PC-9 (cell line): ENCODE measurements at regions of chrX and their contacts with region 1.

Region 1: DNA sequence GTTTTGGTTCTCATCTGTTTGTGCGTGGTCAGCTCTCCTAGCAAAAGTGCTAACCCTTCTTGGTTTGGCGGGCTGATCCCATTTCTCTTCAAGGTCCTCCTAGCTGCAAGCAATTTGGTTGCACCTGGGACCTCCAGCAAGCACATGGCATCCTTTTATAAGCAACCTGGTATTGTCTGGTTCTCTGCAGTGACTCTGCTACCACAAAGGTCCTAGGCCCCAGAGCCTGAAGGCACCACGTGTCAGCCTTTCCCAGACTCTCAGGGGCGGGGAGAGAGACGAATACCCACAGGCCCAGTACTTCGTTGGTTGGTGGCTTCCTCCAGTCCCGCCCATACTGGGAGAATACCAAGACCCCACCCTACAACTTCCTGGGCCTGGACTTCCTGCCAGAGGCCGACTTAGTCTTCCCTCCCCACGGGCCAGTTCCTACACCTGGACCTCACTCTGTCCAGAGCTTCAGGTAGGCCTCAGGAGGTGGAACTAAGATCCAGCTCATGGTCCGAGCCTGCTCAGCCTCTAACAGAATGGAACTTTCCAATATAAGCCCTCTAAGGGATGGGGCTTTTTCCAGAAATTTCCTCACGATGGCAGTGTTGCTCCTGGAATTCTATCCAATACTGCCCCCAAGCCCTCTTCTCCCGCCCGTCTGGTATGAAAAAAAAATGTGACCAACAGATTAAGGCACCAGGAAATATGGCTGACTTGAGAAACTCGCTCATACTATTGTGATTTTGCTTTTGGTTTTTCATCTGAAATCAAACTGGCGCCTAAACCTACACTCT is 192.5 kb upstream of the STK26 start:
- DNase-seq: peak; percentile 91 to 97
- H3K4me3 ChIP-seq: peak overlapping the region; percentile 70
- H3K27ac ChIP-seq: peak overlapping the region; percentile 91
- H3K4me1 ChIP-seq: peaks cover 29% of the 10 kb centered on the region
- H3K27me3 ChIP-seq: no peaks in the 10 kb centered on the region
- CTCF ChIP-seq: peak; percentile 79

Region 2: DNA sequence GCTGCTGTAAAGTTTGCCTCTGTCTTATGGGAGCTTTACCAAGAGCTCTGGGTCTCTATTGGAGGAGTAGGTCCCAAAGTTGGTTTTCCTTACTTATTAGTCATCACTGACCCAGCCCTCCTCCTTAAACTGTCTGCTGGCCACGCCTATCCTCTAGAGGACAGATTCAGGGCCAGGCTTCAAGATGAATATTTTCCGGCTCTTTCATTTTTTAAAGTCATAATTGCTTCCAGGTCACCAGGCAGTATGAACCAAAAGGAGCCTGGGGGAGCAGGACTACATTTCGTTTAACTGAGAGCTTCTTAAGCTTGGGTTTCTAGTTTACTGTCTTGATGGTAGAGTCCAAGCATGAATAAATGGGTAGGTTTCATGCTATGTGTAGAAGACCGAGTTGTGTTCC is 1834.5 kb before region 1 on chrX:
- CTCF ChIA-PET with region 1: no interaction called
- POLR2A ChIA-PET with region 1: no interaction called
- intact Hi-C with region 1: no loop called
- DNase-seq: no peak
- H3K4me3 ChIP-seq: no peak overlapping the region
- H3K27ac ChIP-seq: no peak overlapping the region
- H3K4me1 ChIP-seq: peaks cover 5% of the 10 kb centered on the region; the same call in 1 of the 2 replicates
- H3K27me3 ChIP-seq: no peaks in the 10 kb centered on the region
- CTCF ChIP-seq: no peak

Region 3: DNA sequence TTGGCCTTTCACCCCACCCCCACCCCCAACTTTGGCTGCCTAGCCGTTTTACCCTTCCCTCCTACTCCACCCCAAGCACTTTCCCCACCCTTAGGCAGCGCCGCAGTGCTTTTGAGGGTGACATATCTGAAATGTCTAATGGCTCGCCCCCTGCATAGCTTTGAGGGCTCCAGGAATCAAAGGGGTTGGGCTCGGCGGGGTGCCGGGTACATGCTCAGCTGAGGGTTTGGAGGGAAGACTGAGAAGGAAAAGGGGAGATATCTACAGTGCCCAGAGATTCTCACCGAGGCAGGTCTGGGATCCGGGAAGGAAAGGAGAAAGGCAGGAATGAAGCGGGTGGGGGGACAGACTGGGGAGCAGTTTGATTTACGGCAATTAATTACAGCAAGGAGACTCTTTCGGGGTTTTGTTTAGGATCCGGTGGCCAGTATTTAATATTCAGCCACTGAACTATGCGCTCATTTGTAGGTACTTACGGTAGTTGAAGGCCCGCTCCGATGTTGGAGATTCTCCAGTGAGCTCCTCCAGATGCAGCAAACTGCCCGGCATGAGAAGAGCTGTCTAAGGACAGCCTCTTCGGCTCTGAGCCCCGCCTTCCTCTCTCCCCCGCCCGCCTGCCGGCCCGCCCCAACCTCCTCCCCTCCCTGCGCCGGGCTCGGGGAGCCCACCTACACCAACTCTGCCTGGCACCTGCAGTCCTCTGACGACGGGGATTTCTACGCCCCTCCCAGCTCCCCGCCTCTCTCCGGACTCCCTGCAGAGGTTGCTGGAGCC is 541.7 kb before region 1 on chrX and contains the start of gene IGSF1:
- CTCF ChIA-PET with region 1: no interaction called
- POLR2A ChIA-PET with region 1: no interaction called
- intact Hi-C with region 1: no loop called
- DNase-seq: no peak
- H3K4me3 ChIP-seq: no peak within 1 kb of the TSS
- H3K27ac ChIP-seq: no peak within 1 kb of the TSS
- H3K4me1 ChIP-seq: no peaks in the 10 kb centered on the region
- H3K27me3 ChIP-seq: peaks cover 4% of the 10 kb centered on the region; the same call in 1 of the 2 replicates
- CTCF ChIP-seq: no peak
- total RNA-seq, gene IGSF1: 0.23 and 0.48 TPM in 2 replicates

Region 4: GRCh38 chrX:131704136-131704695 is 126.4 kb before region 1 on chrX:
- CTCF ChIA-PET with region 1: no interaction called
- POLR2A ChIA-PET with region 1: no interaction called
- intact Hi-C with region 1: loop called (anchors 1 kb)
- DNase-seq: peak; percentile 36 to 72
- H3K4me3 ChIP-seq: peak overlapping the region; percentile 31; the same call in 1 of the 2 replicates
- H3K27ac ChIP-seq: no peak overlapping the region
- H3K4me1 ChIP-seq: no peaks in the 10 kb centered on the region
- H3K27me3 ChIP-seq: no peaks in the 10 kb centered on the region
- CTCF ChIP-seq: peak; percentile 28; the same call in 1 of the 2 replicates

Region 5: DNA sequence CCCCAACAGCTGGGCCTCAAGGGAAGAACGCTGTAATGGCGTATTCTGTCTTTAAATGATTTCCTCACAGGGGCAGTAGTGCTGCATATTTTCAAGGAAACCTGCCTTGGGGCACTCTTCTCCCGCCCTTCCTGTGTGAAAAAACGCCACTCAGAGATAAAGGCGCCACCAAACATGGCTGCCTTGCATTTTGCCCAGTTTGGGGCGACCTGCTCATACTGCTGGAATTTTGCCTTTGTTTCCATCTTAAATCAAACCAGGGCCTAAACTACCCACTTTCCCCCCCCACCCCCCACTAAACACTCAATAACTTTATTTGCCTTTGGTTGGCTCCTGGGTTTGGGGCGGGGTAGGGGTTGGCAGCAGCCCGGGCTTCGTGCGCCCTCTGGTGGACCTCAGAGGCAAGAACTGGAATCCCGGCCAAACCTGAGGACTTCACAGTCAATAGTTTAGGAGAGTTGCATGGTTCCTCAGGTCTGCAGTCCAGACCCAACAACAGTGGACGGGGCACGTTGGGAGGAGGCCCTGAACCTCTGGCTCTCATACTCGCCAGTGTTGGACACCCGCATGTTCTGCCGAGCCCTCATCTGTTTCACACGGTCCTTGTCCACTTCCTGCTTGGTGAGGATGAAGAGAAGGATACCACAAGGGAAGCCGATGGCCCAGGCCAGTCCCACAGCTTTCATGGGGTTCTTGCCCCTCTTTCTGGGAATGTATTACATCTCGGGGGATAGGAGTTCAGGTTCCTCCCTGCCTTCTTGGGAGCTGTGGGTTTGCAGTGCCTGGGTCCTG is 27.6 kb before region 1 on chrX:
- CTCF ChIA-PET with region 1: no interaction called
- POLR2A ChIA-PET with region 1: no interaction called
- intact Hi-C with region 1: no loop called
- DNase-seq: peak in 1 of 2 experiments; percentile 21
- H3K4me3 ChIP-seq: no peak overlapping the region
- H3K27ac ChIP-seq: no peak overlapping the region
- H3K4me1 ChIP-seq: no peaks in the 10 kb centered on the region
- H3K27me3 ChIP-seq: no peaks in the 10 kb centered on the region
- CTCF ChIP-seq: peak; percentile 52

Region 6: GRCh38 chrX:131894987-131895386 is 64.4 kb after region 1 on chrX:
- CTCF ChIA-PET with region 1: no interaction called
- POLR2A ChIA-PET with region 1: no interaction called
- intact Hi-C with region 1: no loop called
- DNase-seq: peak in 1 of 2 experiments; percentile 64
- H3K4me3 ChIP-seq: no peak overlapping the region
- H3K27ac ChIP-seq: no peak overlapping the region
- H3K4me1 ChIP-seq: peaks cover 11% of the 10 kb centered on the region
- H3K27me3 ChIP-seq: no peaks in the 10 kb centered on the region
- CTCF ChIP-seq: no peak

Region 7: GRCh38 chrX:132488819-132489577 is 658.4 kb after region 1 on chrX and contains the start of gene MBNL3:
- CTCF ChIA-PET with region 1: no interaction called
- POLR2A ChIA-PET with region 1: interaction called, 3 read pairs
- intact Hi-C with region 1: loop called (anchors 10 kb)
- DNase-seq: peak; percentile 72 to 86
- H3K4me3 ChIP-seq: peak within 1 kb of the TSS; percentile 93
- H3K27ac ChIP-seq: peak within 1 kb of the TSS; percentile 75
- H3K4me1 ChIP-seq: peaks cover 27% of the 10 kb centered on the region
- H3K27me3 ChIP-seq: no peaks in the 10 kb centered on the region
- CTCF ChIP-seq: no peak
- total RNA-seq, gene MBNL3: 24.4 and 36.1 TPM in 2 replicates

Region 8: GRCh38 chrX:132631579-132632232 is 801.1 kb after region 1 on chrX:
- CTCF ChIA-PET with region 1: no interaction called
- POLR2A ChIA-PET with region 1: no interaction called
- intact Hi-C with region 1: loop called (anchors 5 kb)
- DNase-seq: peak; percentile 5 to 36
- H3K4me3 ChIP-seq: no peak overlapping the region
- H3K27ac ChIP-seq: no peak overlapping the region
- H3K4me1 ChIP-seq: no peaks in the 10 kb centered on the region
- H3K27me3 ChIP-seq: no peaks in the 10 kb centered on the region
- CTCF ChIP-seq: peak; percentile 76